Transverse colon (tissue), 4 donors: ENCODE measurements at regions of chr6 and their contacts with region 1.

Region 1: GRCh38 chr6:115896538-115897129 is 164.1 kb downstream of the FRK start:
- DNase-seq: no peak
- H3K4me3 ChIP-seq: no peak overlapping the region
- H3K27ac ChIP-seq: no peak overlapping the region
- H3K4me1 ChIP-seq: no peaks in the 10 kb centered on the region
- H3K27me3 ChIP-seq: no peaks in the 10 kb centered on the region
- CTCF ChIP-seq: peak in 4 of 5 experiments; percentile 39 to 61 (median 52)
- EP300 ChIP-seq: no peak
- POLR2A ChIP-seq: no peak

Region 2: GRCh38 chr6:114747987-114748630 is 1148.5 kb before region 1 on chr6:
- in situ Hi-C with region 1: loop called in 2 of 4 experiments (anchors 25 kb)
- intact Hi-C with region 1: no loop called
- DNase-seq: no peak
- H3K4me3 ChIP-seq: no peak overlapping the region
- H3K27ac ChIP-seq: no peak overlapping the region
- H3K4me1 ChIP-seq: no peaks in the 10 kb centered on the region
- H3K27me3 ChIP-seq: no peaks in the 10 kb centered on the region
- CTCF ChIP-seq: peak in 4 of 5 experiments; percentile 26 to 64 (median 52)
- EP300 ChIP-seq: no peak
- POLR2A ChIP-seq: no peak

Region 3: GRCh38 chr6:115796061-115796460 is 100.6 kb before region 1 on chr6:
- in situ Hi-C with region 1: no loop called
- intact Hi-C with region 1: no loop called
- DNase-seq: no peak
- H3K4me3 ChIP-seq: no peak overlapping the region
- H3K27ac ChIP-seq: no peak overlapping the region
- H3K4me1 ChIP-seq: no peaks in the 10 kb centered on the region
- H3K27me3 ChIP-seq: no peaks in the 10 kb centered on the region
- CTCF ChIP-seq: no peak
- EP300 ChIP-seq: no peak
- POLR2A ChIP-seq: no peak

Region 4: DNA sequence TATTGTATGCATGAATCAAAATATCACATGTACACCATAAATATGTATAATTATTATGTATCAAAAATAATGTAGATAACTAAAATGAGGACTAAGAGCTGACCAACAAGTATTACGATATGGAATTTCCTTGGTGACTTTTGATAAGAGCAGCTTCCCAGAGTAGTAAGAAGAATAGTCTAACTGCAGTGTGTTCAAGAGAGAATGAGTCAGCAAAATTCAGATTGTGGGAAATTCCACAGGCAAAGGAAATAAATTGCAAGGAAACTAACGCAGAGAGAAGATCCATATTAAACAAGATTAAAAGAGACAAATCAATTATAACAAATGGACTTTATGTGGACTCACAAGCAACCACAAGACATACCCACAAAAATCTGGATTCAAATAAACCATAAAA is 137.7 kb after region 1 on chr6:
- in situ Hi-C with region 1: no loop called
- intact Hi-C with region 1: no loop called
- DNase-seq: no peak
- H3K4me3 ChIP-seq: no peak overlapping the region
- H3K27ac ChIP-seq: no peak overlapping the region
- H3K4me1 ChIP-seq: peaks cover 0 to 14% (median 3%) of the 10 kb centered on the region in 4 donors
- H3K27me3 ChIP-seq: no peaks in the 10 kb centered on the region
- CTCF ChIP-seq: no peak
- EP300 ChIP-seq: no peak
- POLR2A ChIP-seq: no peak